Endothelial cell of umbilical vein (primary cell): ENCODE measurements at regions of chr6 and their contacts with region 1.

Region 1: DNA sequence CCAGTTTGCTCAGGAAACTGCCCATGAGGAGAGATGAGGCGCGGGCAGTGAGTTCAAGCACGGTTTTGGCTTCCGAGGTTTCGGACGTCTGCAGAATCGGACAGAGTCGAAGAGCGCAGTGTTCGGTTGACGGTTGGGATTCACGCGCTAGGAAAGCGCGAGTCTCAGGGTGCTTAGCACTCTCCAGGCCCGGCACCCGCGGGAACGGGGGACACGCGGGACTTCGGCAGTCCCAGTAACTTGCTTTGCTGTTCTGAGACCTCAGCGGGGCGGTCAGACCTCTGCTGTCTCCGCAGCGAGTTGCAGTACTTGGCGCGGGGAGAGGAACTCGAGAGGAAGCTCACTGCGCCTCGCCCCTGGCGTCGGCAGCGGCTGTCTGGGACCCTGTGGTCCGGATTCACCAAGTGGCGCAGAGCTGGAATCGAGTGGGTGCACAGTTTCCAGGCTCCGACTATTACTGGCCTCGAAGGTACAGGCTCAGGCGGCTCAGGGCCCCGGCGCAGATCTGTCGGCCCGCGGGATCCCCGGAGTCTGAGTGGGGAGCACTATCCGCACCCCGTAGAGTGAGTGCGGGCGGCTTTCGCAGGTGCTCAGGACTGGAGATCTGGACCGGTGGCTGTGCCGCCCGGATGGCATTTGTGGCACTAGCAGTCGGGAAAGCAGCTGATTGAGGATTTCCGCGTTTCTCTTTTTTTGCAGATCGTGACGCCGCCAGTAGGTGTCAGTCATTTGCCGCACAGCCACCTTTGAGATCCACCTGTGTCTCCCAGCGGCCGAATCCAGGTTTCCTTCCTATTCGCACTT is at the start of gene POM121L2:
- DNase-seq: peak; percentile 65
- H3K4me3 ChIP-seq: peak within 1 kb of the TSS; percentile 41 to 60 (median 51)
- H3K27ac ChIP-seq: no peak within 1 kb of the TSS
- H3K4me1 ChIP-seq: peaks cover 9% of the 10 kb centered on the region
- H3K27me3 ChIP-seq: peaks cover 14 to 20% of the 10 kb centered on the region in 2 experiments
- CTCF ChIP-seq: peak; percentile 50 to 69
- POLR2A ChIP-seq: no peak
- total RNA-seq, gene POM121L2: not detected in 2 replicates

Region 2: DNA sequence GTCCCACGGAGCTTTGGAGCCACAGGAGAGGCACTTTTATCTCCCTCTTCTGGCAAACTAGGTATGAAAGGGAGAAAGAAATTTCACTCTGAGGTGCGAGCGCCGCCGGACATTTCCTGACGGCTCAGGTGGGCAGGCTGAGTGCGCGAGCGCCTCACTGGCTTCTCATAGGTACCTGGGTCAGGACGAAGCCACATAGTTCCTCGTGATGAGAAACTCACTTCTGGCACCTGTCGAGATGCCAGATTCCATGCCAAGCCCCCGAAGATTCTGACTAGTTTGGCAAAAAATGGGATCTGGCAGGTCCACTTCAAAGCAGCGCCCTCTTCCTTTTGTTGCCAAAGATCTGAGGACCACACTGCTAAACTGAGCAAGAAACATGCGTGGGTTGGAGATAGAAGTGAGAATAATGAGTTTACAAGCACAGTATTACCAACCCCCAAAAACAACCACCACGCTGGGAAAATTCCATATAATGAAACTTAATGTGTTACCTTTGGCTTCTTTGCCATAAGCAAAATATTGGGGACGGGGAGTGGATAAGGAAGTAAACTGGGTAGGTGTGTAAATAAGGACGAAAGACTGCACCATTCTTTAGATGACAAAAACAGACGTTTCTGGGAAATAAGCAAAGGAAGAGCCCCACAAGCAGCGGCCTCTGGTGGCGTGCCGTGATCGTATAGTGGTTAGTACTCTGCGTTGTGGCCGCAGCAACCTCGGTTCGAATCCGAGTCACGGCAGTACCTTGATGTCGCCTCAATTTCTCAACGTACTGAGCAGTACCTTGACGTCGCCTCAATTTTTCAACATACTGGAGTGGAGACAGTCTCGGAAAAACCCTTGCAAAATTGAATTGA is 154.7 kb before region 1 on chr6:
- CTCF ChIA-PET with region 1: interaction called, 5 read pairs
- POLR2A ChIA-PET with region 1: no interaction called
- dilution Hi-C with region 1: no loop called
- intact Hi-C with region 1: loop called (anchors 1 kb)
- DNase-seq: peak; percentile 57
- H3K4me3 ChIP-seq: peak overlapping the region; percentile 30 to 64 (median 59)
- H3K27ac ChIP-seq: no peak overlapping the region
- H3K4me1 ChIP-seq: peaks cover 10% of the 10 kb centered on the region
- H3K27me3 ChIP-seq: peaks cover 8 to 11% of the 10 kb centered on the region in 2 experiments
- CTCF ChIP-seq: peak; percentile 42 to 63
- POLR2A ChIP-seq: no peak

Region 3: DNA sequence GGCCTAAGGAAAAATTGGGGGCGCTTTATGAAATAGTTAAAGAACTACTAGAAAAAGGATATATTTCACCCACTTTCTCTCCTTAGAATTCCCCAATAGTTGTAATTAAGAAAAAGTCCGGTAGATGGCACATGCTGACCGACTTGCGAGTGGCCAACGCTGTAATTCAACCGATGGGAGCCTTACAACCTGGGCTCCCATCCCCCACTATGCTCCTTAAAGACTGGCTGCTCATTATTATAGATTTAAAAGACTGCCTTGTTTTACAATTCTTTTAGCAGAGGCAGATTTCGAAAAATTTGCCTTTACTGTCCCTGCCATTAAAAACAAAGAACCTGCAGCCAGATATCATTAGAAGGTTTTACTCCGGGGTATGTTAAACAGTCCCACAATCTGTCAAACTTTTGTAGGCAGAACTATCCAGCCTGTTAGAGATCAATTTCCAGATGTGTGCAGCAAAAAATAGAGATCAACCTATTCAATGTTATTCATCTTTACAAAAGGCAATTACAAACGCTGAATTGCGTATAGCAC is 123.4 kb before region 1 on chr6:
- CTCF ChIA-PET with region 1: interaction called, 5 read pairs
- POLR2A ChIA-PET with region 1: no interaction called
- dilution Hi-C with region 1: no loop called
- intact Hi-C with region 1: loop called (anchors 1 kb)
- DNase-seq: peak; percentile 83
- H3K4me3 ChIP-seq: peak overlapping the region; percentile 59 to 80 (median 66)
- H3K27ac ChIP-seq: peak overlapping the region; percentile 37
- H3K4me1 ChIP-seq: no peaks in the 10 kb centered on the region
- H3K27me3 ChIP-seq: peaks cover 0 to 4% of the 10 kb centered on the region in 2 experiments
- CTCF ChIP-seq: peak; percentile 54 to 55
- POLR2A ChIP-seq: no peak

Region 4: DNA sequence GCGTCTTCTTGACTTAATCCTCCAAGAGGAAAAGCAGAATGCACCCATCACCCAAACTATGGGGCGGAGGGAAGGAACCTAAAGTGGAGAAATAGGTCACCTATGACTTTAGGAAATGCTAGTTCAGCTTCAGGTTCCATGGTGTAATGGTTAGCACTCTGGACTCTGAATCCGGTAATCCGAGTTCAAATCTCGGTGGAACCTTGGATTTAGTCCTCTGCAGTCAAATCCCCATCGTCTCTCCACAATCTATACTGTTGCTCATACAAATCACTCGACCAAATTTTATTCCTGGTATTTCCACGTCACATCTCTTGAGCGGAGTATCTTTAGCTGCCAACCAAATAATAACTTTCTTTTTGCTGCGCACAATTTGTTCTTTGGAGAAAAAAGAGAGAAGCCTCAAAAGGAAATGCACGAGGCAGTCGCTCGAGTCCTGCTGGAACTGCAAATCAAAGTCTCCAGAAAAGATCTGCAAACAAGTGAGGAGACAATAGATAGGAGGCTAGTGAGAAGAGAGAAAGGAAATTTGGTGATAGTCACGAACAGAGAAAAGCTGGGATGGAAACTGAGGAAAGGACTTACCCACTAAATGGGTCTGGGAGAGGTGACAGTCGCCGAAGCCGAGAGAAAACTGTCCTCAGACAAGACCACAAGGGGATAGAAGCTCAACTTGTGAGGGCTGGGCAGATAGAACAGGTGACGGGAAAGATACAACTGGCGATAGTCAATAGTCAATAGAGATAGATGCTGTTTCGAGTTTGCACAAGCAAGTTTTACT is 16.9 kb before region 1 on chr6:
- CTCF ChIA-PET with region 1: interaction called, 19 read pairs
- POLR2A ChIA-PET with region 1: no interaction called
- dilution Hi-C with region 1: no loop called
- intact Hi-C with region 1: no loop called
- DNase-seq: peak; percentile 37
- H3K4me3 ChIP-seq: peak overlapping the region; percentile 18 to 80 (median 72)
- H3K27ac ChIP-seq: no peak overlapping the region
- H3K4me1 ChIP-seq: peaks cover 17% of the 10 kb centered on the region
- H3K27me3 ChIP-seq: peaks cover 16 to 20% of the 10 kb centered on the region in 2 experiments
- CTCF ChIP-seq: no peak
- POLR2A ChIP-seq: no peak

Region 5: GRCh38 chr6:27332692-27333641 is 20.6 kb after region 1 on chr6:
- CTCF ChIA-PET with region 1: interaction called, 14 read pairs
- POLR2A ChIA-PET with region 1: no interaction called
- dilution Hi-C with region 1: no loop called
- intact Hi-C with region 1: no loop called
- DNase-seq: peak; percentile 37
- H3K4me3 ChIP-seq: peak overlapping the region in 2 of 3 experiments; percentile 29 to 47
- H3K27ac ChIP-seq: no peak overlapping the region
- H3K4me1 ChIP-seq: no peaks in the 10 kb centered on the region
- H3K27me3 ChIP-seq: peaks cover 1 to 2% of the 10 kb centered on the region in 2 experiments
- CTCF ChIP-seq: no peak
- POLR2A ChIP-seq: no peak

Region 6: GRCh38 chr6:27479319-27480182 is 167.2 kb after region 1 on chr6:
- CTCF ChIA-PET with region 1: interaction called, 3 read pairs
- POLR2A ChIA-PET with region 1: no interaction called
- dilution Hi-C with region 1: no loop called
- intact Hi-C with region 1: loop called (anchors 5 kb)
- DNase-seq: peak; percentile 94
- H3K4me3 ChIP-seq: peak overlapping the region; percentile 78 to 93 (median 88)
- H3K27ac ChIP-seq: peak overlapping the region; percentile 82
- H3K4me1 ChIP-seq: peaks cover 7% of the 10 kb centered on the region
- H3K27me3 ChIP-seq: peaks cover 11 to 16% of the 10 kb centered on the region in 2 experiments
- CTCF ChIP-seq: no peak
- POLR2A ChIP-seq: no peak

Region 7: DNA sequence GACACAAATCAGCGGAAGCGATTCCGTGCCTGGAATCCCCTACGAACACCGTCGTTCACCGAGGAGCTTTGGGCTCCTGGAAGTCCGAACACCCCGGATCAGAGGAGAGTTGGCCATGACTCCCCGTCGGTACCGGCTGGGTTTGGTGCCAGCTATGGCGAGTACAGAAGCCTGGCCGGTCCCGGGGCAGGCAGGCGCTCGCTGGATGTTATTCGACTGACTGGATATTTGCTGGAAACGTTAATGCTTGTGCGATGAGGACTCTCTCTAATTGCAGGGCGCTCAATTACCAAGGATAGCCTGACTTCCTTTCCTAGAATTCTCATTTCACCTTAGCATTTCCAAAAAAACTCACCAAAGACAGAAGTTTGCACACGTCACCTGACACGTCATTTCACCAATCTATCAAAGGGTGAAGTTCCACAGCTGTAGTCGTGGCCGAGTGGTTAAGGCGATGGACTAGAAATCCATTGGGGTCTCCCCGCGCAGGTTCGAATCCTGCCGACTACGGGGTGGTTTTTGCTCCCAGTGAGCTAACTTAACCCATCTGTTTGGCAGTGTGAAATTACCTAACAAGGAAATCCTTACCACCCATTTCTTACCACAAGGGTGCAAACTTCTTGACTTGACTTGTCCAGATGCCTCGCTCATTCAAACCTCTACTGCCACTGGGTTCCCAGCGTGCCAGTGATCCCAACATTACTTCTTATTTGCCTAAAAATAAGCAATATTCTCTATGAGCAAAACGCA is 183.2 kb after region 1 on chr6:
- CTCF ChIA-PET with region 1: interaction called, 4 read pairs
- POLR2A ChIA-PET with region 1: no interaction called
- dilution Hi-C with region 1: no loop called
- intact Hi-C with region 1: loop called (anchors 5 kb)
- DNase-seq: peak; percentile 58
- H3K4me3 ChIP-seq: peak overlapping the region; percentile 44 to 84 (median 82)
- H3K27ac ChIP-seq: no peak overlapping the region
- H3K4me1 ChIP-seq: peaks cover 7% of the 10 kb centered on the region
- H3K27me3 ChIP-seq: peaks cover 11 to 23% of the 10 kb centered on the region in 2 experiments
- CTCF ChIP-seq: peak in 1 of 2 donors; percentile 5
- POLR2A ChIP-seq: no peak